ENCODE measurements at regions of chrX and their contacts with region 1.

Region 1: DNA sequence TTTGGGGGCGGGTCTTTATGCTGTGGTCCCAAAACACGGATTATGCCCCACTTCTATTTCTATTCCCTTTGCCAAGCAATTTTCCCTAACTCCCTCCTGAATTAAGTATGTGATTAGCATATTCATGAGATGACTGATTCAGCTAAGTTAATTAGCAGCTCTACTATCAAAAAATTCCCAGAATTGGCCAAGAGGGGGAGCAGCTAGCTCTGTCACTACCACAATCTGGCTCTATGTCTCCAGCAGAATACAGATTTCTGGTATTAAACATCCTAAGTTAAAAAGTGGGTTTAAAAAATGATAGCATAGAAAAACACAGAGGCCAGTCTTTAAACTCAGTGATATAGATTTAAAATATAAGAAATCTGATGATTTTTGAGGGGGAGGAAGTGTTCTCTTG is 80.3 kb downstream of the GPC4 start:
- DNase-seq: peak in 1 of 3 donors; percentile 68
- ATAC-seq: peak; percentile 58
- H3K4me3 ChIP-seq: no peak overlapping the region
- H3K4me1 ChIP-seq: no peaks in the 10 kb centered on the region
- CTCF ChIP-seq: no peak

Region 2: DNA sequence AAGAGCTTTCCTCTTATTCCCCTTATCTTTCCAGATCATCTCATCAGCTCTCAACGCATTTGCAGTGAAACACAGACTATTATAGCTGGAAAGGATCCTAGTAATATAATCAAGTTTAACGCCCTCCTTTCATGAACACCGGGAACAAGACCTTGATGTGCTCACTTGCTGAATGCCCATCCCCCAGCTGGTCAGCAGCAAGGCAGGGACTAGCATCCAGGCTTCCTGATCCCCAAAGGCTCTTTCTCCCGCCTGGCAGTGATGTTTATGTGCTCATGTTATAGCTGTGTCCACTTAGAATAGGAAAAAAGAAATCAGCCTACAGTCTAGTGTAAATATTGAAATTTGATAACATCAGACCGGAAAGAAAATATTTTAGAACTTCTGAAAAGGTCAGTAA is 55.7 kb after region 1 on chrX:
- intact Hi-C with region 1: no loop called
- DNase-seq: peak in 1 of 3 donors; percentile 13
- ATAC-seq: peak; percentile 69
- H3K4me3 ChIP-seq: no peak overlapping the region
- H3K4me1 ChIP-seq: peaks cover 7% of the 10 kb centered on the region
- CTCF ChIP-seq: no peak

Region 3: GRCh38 chrX:133415276-133416105 is 80.5 kb after region 1 on chrX and contains the start of gene GPC4:
- intact Hi-C with region 1: loop called in 1 of 2 experiments (anchors 10 kb)
- DNase-seq: peak; percentile 77 to 87 (median 78)
- ATAC-seq: peak; percentile 89
- H3K4me3 ChIP-seq: peak within 1 kb of the TSS; percentile 36
- H3K4me1 ChIP-seq: no peaks in the 10 kb centered on the region
- CTCF ChIP-seq: no peak
- total RNA-seq, gene GPC4: 12.7 to 33.5 (median 18.4) TPM